ENCODE measurements at regions of chr19 and their contacts with region 1.

Region 1: GRCh38 chr19:10551698-10552301 is 8.1 kb downstream of the ATG4D start:
- DNase-seq: peak; percentile 73
- ATAC-seq: peak; percentile 48
- H3K4me3 ChIP-seq: no peak overlapping the region
- H3K27ac ChIP-seq: no peak overlapping the region
- H3K4me1 ChIP-seq: no peaks in the 10 kb centered on the region
- H3K27me3 ChIP-seq: no peaks in the 10 kb centered on the region
- CTCF ChIP-seq: peak; percentile 52

Region 2: DNA sequence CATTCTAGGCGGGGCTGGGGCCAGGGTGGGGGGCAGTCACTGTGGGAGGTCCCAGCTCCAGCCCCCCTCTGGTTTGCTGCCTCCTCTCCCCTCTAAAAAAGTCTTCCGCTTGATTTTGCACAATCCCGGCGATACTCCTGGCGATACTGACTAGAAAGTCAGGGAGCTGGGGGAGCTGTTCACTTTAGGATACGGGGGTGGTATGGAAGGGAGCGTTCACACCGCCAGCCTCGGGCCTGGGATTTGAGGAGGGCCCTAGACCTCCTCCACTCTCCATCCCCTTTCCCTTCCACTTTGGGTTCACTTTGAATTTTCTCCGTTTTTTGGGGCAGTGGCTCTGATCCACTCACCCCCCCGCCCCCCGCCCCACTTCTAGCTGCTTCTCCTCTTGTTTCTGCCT is 83.7 kb before region 1 on chr19:
- CTCF ChIA-PET with region 1: interaction called, 12 read pairs
- POLR2A ChIA-PET with region 1: no interaction called
- intact Hi-C with region 1: no loop called
- DNase-seq: no peak
- ATAC-seq: no peak
- H3K4me3 ChIP-seq: no peak overlapping the region
- H3K27ac ChIP-seq: no peak overlapping the region
- H3K4me1 ChIP-seq: no peaks in the 10 kb centered on the region
- H3K27me3 ChIP-seq: no peaks in the 10 kb centered on the region
- CTCF ChIP-seq: no peak

Region 3: GRCh38 chr19:10636304-10636972 is 84.6 kb after region 1 on chr19:
- CTCF ChIA-PET with region 1: no interaction called
- POLR2A ChIA-PET with region 1: no interaction called
- intact Hi-C with region 1: no loop called
- DNase-seq: no peak
- ATAC-seq: no peak
- H3K4me3 ChIP-seq: no peak overlapping the region
- H3K27ac ChIP-seq: no peak overlapping the region
- H3K4me1 ChIP-seq: no peaks in the 10 kb centered on the region
- H3K27me3 ChIP-seq: no peaks in the 10 kb centered on the region
- CTCF ChIP-seq: no peak